Esophagus muscularis mucosa (tissue), 4 donors: ENCODE measurements at regions of chr20 and their contacts with region 1.

Region 1: GRCh38 chr20:56629670-56630478 is 768 bp downstream of the TFAP2C start:
- DNase-seq: no peak
- H3K4me3 ChIP-seq: peak overlapping the region; percentile 57 to 70 (median 66)
- H3K27ac ChIP-seq: peak overlapping the region; percentile 44 to 80 (median 66)
- H3K4me1 ChIP-seq: peaks cover 43 to 73% (median 64%) of the 10 kb centered on the region in 4 donors
- H3K27me3 ChIP-seq: peaks cover 5 to 95% (median 64%) of the 10 kb centered on the region in 4 donors
- CTCF ChIP-seq: peak; percentile 59 to 68 (median 64)
- EP300 ChIP-seq: no peak
- POLR2A ChIP-seq: no peak

Region 2: DNA sequence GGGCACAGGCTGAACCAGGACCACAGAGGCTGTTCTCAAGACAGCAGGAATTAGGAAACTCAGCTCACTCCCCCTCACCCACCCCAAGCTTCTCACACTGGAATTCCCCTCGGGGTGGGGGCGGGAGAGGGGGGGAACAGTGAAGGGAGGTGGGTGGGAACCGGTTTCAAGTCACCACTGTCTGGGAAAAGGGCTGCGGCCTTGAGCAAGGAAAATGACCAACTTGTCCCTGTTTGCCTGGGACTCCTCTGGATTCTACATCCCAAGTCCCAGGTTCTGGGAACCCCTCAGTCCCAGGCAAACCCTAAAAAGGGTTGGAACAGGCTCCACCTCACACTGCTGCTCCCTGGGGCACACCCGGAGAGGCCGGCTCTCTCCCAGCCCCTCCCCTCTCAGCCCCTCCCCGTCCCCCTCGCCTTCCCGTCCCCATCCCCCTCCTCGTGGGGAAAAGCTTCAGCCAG is 230.0 kb after region 1 on chr20:
- intact Hi-C with region 1: loop called (anchors 10 kb)
- DNase-seq: no peak
- H3K4me3 ChIP-seq: no peak overlapping the region
- H3K27ac ChIP-seq: no peak overlapping the region
- H3K4me1 ChIP-seq: peaks cover 0 to 16% (median 9%) of the 10 kb centered on the region in 4 donors
- H3K27me3 ChIP-seq: peaks cover 0 to 12% (median 0%) of the 10 kb centered on the region in 4 donors
- CTCF ChIP-seq: no peak
- EP300 ChIP-seq: no peak
- POLR2A ChIP-seq: no peak